ENCODE measurements at regions of chr18 and their contacts with region 1.

Region 1: DNA sequence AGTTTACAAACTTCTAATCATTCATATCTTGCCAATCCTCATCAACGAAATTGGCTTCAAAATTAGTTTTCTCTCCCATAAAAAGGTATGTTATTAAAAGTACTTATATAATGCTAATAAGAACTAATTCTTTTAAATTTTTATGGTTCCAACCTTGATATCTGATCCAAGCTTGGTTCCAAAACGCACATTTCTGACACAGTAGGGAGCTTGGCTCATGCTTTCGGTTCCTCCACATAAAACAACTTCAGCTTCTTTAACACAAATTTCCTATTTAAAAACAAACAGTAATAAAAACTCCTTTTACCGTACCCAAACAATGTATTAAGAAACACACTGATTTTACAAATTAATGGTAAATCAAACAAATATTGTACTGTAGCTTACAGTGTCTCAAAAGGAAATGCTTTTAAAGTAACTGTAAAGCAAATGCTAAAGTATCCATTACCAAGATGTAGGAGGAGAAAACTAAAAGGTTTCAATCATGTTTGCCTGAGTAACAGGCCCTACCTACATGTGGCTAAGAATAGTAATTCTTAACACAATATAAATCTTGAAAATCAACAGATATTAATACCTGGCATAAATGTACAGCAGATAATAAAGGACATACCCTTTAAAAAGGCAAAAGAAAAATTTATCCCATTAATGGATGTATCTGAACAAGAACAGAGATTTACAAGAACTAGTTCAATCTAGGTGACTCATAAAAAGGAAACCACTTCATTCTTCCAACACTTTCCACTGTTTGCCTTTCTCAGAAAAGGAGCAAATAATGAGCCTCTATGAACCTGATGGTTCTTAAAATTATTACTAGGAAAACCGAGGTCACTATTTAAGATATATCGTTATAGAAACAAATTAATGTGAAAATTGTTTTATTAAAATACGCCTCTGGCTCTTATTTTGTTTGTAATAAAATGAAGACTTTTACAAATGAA is 17.5 kb downstream of the ACAA2 start:
- DNase-seq: no peak
- ATAC-seq: no peak
- H3K4me3 ChIP-seq: no peak overlapping the region
- H3K4me3 Mint-ChIP-seq: no peak overlapping the region
- H3K27ac ChIP-seq: no peak overlapping the region
- H3K27ac Mint-ChIP-seq: no peak overlapping the region
- H3K4me1 ChIP-seq: no peaks in the 10 kb centered on the region
- H3K4me1 Mint-ChIP-seq: no peaks in the 10 kb centered on the region
- H3K27me3 ChIP-seq: no peaks in the 10 kb centered on the region
- H3K27me3 Mint-ChIP-seq: no peaks in the 10 kb centered on the region
- CTCF ChIP-seq: no peak

Region 2: DNA sequence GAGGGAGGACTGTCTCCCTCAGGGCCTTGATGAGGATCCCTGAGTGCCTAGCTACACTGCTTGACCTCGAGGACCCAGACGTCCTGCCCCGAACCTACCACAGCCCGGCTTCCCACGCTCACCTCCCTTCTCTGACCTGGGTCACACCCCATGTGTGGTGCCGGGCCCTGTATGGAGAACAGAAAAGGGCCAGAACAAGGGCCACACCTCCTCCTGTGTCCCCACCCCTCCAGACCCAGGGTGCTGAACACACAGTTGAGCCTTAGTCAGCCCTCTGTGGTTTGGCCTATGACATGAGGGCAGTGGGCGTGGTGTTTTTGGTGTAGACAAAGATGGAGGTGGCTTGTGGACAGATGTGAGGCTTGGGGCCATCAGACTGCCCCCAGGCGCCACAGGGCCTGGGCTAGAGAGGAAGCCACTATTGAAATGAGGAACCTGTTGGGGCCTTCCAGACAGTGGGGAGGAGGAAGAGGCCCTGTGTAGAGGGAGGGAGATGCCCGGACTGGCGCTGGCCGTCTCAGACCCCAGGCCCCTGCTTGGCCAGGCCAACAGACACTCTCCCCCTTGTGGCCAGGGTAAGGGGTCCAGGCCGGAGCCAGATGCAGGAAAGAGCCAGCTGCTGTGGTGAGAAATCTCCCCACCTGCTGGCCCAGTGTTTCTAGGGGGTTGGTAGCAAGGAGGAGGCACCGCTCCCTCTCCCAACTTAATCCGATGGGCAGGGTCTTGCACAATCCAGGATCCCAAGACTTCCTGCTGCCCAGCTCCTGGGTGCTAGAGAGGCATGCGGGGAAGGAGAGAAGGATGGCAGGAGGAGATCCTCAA is 899.0 kb before region 1 on chr18:
- CTCF ChIA-PET with region 1: no interaction called
- POLR2A ChIA-PET with region 1: no interaction called
- intact Hi-C with region 1: no loop called
- DNase-seq: peak in 3 of 14 experiments; percentile 42 to 80 (median 70)
- ATAC-seq: peak; percentile 43
- H3K4me3 ChIP-seq: no peak overlapping the region
- H3K4me3 Mint-ChIP-seq: no peak overlapping the region
- H3K27ac ChIP-seq: no peak overlapping the region
- H3K27ac Mint-ChIP-seq: no peak overlapping the region
- H3K4me1 ChIP-seq: peaks cover 7% of the 10 kb centered on the region
- H3K4me1 Mint-ChIP-seq: peaks cover 13% of the 10 kb centered on the region
- H3K27me3 ChIP-seq: no peaks in the 10 kb centered on the region
- H3K27me3 Mint-ChIP-seq: no peaks in the 10 kb centered on the region
- CTCF ChIP-seq: no peak

Region 3: DNA sequence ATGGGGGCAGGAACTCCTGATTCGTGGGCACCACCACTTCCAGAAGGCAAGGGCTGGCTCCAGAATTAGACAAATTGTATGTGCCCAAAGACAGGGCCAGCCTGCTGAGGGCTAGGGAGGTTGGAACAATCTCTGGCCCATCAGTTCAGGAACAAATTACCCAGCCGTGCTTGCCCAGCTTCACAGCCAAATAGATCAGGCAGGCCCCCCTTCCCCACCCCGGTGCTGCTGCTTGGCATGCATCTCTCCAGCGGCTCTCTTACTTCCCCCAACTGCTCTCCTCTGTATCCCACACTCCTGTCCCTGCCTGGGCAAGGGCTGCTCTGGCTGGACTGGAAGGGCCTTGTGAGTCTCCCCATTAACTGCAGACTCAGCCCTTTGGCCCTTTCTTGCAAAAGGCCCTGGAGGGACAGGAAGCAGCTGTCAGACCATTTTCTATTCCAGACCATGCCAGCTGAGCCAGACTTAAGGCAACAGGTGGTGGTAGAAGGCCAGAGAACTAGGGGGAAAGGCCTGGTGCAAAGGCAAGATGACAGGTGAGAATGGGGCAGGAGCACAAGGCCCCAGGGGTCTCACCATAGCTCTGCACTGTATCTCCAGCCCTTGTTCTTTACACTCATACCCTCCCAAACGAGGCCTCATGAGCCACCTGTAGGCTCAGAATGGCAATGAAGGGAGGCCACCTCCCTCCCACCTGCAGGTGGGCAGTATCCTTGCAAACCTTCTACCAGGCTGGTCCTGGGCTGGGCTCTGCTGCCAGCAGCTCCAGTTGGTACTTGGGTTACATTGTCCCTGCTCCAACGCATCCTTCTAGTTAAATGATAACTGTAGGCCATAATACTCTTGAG is 48.1 kb after region 1 on chr18:
- CTCF ChIA-PET with region 1: no interaction called
- POLR2A ChIA-PET with region 1: no interaction called
- intact Hi-C with region 1: loop called in 1 of 2 experiments (anchors 5 kb)
- DNase-seq: no peak
- ATAC-seq: no peak
- H3K4me3 ChIP-seq: no peak overlapping the region
- H3K4me3 Mint-ChIP-seq: no peak overlapping the region
- H3K27ac ChIP-seq: no peak overlapping the region
- H3K27ac Mint-ChIP-seq: no peak overlapping the region
- H3K4me1 ChIP-seq: no peaks in the 10 kb centered on the region
- H3K4me1 Mint-ChIP-seq: no peaks in the 10 kb centered on the region
- H3K27me3 ChIP-seq: no peaks in the 10 kb centered on the region
- H3K27me3 Mint-ChIP-seq: peaks cover 20% of the 10 kb centered on the region
- CTCF ChIP-seq: no peak

Region 4: DNA sequence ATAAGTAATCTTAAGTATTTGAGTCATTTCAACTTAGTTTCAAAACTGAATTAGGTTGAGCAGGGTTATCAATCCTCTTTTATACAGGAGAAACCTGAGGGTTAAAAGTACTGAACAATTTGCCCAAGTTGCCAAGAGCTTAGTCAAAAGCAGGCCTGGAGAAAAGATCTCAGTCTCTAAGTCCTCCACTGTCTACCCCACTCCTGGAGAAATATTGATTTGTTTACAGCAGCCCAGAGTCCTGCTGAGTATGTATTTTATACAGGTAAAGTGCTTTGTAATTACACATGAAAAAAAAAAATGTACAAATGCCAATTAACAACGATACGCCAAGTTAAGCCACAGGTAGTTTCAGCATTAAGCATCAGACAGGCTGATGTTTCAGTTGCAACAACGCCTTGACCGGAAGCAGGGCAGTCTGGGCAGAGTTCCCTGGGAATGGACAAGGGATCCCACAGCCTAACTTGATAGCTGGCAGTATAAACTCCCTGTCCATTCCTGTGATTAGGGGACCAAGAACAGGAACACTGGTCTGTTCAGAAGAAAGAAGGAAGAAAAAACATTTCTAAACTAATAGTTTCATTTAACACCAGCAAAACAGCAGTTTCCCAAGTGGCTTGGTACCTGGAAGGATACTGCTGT is 266.1 kb after region 1 on chr18:
- CTCF ChIA-PET with region 1: no interaction called
- POLR2A ChIA-PET with region 1: no interaction called
- intact Hi-C with region 1: no loop called
- DNase-seq: no peak
- ATAC-seq: no peak
- H3K4me3 ChIP-seq: no peak overlapping the region
- H3K4me3 Mint-ChIP-seq: no peak overlapping the region
- H3K27ac ChIP-seq: no peak overlapping the region
- H3K27ac Mint-ChIP-seq: no peak overlapping the region
- H3K4me1 ChIP-seq: no peaks in the 10 kb centered on the region
- H3K4me1 Mint-ChIP-seq: no peaks in the 10 kb centered on the region
- H3K27me3 ChIP-seq: peaks cover 0 to 8% of the 10 kb centered on the region in 2 experiments
- H3K27me3 Mint-ChIP-seq: peaks cover 21% of the 10 kb centered on the region
- CTCF ChIP-seq: no peak